Common myeloid progenitor, CD34-positive (primary cell): ENCODE measurements at regions of chr5 and their contacts with region 1.

Region 1: GRCh38 chr5:180343831-180344327 is 9.3 kb downstream of the GFPT2 start:
- DNase-seq: no peak
- H3K4me3 ChIP-seq: no peak overlapping the region
- H3K27ac ChIP-seq: no peak overlapping the region
- H3K4me1 ChIP-seq: peaks cover 0 to 2% (median 0%) of the 10 kb centered on the region in 4 experiments
- H3K27me3 ChIP-seq: peaks cover 2 to 28% (median 9%) of the 10 kb centered on the region in 5 experiments

Region 2: DNA sequence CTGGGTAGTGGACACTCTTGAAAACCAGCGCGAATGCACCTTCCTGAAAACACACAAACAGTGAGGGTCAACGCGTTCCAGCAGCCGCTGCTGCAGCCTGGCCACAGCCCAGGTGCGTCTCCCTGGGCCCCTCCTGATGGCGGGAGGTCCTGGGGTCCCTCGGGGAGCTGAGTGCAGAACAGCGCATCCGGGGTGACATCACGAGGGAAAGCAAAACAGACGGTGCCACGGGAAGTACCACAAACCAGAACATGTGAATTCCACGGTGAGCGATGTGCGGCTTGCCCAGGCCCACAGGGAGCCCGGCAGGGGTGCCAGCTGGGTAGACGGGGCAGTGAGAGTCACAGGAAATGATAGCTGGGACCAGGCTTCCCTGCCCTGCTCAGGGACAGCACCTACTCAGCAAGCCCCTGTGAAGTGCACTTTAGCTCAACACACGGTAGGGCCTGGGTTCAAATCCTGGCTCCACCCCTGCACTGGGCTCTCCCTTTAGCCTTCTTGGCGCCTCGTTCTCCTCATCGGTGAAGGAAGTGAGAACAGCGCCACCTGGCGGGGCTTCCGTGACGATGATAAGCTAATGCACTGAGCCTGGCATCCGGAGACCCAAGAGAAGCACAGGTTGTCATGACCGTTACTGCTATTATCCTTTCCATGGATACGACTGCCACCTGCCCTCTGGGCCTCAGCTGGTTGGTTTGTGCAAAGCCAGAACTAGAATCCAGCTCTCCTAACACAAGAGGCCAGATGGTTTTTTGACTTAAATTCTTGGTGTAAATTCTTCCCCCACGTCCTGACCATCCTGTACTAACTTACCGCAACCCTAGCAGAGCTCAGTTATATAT is 15.4 kb before region 1 on chr5:
- CTCF ChIA-PET with region 1: interaction called, 16 read pairs
- POLR2A ChIA-PET with region 1: no interaction called
- DNase-seq: peak; percentile 76 to 90 (median 85)
- H3K4me3 ChIP-seq: no peak overlapping the region
- H3K27ac ChIP-seq: no peak overlapping the region
- H3K4me1 ChIP-seq: peaks cover 0 to 3% (median 0%) of the 10 kb centered on the region in 4 experiments
- H3K27me3 ChIP-seq: peaks cover 0 to 14% (median 4%) of the 10 kb centered on the region in 5 experiments

Region 3: GRCh38 chr5:180353980-180354452 is 10.1 kb after region 1 on chr5:
- CTCF ChIA-PET with region 1: no interaction called
- POLR2A ChIA-PET with region 1: no interaction called
- DNase-seq: peak in 1 of 3 donors; percentile 1
- H3K4me3 ChIP-seq: peak overlapping the region in 5 of 7 experiments; percentile 50 to 73 (median 64)
- H3K27ac ChIP-seq: no peak overlapping the region
- H3K4me1 ChIP-seq: peaks cover 0 to 22% (median 16%) of the 10 kb centered on the region in 4 experiments
- H3K27me3 ChIP-seq: peaks cover 0 to 76% (median 40%) of the 10 kb centered on the region in 5 experiments

Region 4: DNA sequence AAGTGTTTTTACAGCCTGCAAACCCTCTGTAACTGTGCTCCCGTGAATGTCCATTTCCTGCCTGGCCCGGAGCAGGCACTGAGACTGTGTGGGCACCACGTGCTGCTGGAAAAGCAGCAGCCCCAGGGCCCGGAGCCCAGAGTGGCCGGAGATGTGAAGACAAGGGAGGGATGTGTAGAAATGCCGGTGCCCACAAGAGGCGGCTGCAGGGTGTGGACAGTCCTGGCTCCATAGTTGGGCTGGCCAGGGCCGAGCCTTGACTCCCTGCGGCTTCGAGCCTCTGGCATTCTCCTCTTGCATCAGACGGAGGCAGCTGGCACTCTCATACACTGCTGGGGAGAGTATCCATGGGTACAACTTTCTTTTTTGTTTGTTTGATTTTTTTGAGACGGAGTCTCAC is 22.4 kb after region 1 on chr5:
- CTCF ChIA-PET with region 1: no interaction called
- POLR2A ChIA-PET with region 1: no interaction called
- DNase-seq: no peak
- H3K4me3 ChIP-seq: no peak overlapping the region
- H3K27ac ChIP-seq: no peak overlapping the region
- H3K4me1 ChIP-seq: no peaks in the 10 kb centered on the region
- H3K27me3 ChIP-seq: peaks cover 0 to 2% (median 0%) of the 10 kb centered on the region in 5 experiments

Region 5: GRCh38 chr5:180499684-180500083 is 155.8 kb after region 1 on chr5:
- CTCF ChIA-PET with region 1: no interaction called
- POLR2A ChIA-PET with region 1: no interaction called
- DNase-seq: peak in 1 of 3 donors; percentile 16
- H3K4me3 ChIP-seq: no peak overlapping the region
- H3K27ac ChIP-seq: no peak overlapping the region
- H3K4me1 ChIP-seq: peaks cover 7 to 21% (median 19%) of the 10 kb centered on the region in 4 experiments
- H3K27me3 ChIP-seq: no peaks in the 10 kb centered on the region

Region 6: GRCh38 chr5:180668835-180669596 is 325.1 kb after region 1 on chr5:
- CTCF ChIA-PET with region 1: no interaction called
- POLR2A ChIA-PET with region 1: no interaction called
- DNase-seq: no peak
- H3K4me3 ChIP-seq: no peak overlapping the region
- H3K27ac ChIP-seq: no peak overlapping the region
- H3K4me1 ChIP-seq: peaks cover 0 to 14% (median 9%) of the 10 kb centered on the region in 4 experiments
- H3K27me3 ChIP-seq: peaks cover 0 to 24% (median 5%) of the 10 kb centered on the region in 5 experiments